ENCODE measurements at regions of chr2 and their contacts with region 1.

Region 1: DNA sequence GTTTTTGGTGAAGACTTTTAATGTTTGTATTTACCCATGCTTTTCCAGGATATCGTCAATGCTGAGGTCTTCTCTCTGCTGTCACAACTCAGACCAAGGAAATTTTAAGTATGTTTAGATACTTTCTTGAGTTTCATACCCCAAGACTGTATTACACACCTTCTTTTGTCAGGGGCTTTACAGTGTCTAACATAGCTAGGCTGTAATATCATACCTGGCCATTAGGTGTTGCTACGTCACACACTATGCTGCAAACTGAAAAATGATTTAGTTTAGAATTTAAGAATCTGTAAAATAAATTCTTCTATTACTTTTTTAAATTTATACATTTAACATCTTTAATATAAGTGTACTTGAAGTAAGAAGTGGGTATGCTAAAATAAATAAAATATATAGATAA is 358.4 kb upstream of the NRP2 start:
- DNase-seq: no peak
- H3K4me3 ChIP-seq: no peak overlapping the region
- H3K27ac ChIP-seq: no peak overlapping the region
- H3K4me1 ChIP-seq: no peaks in the 10 kb centered on the region
- H3K27me3 ChIP-seq: no peaks in the 10 kb centered on the region
- CTCF ChIP-seq: peak; percentile 31

Region 2: GRCh38 chr2:204108330-204108751 is 1215.6 kb before region 1 on chr2:
- intact Hi-C with region 1: loop called (anchors 10 kb)
- DNase-seq: no peak
- H3K4me3 ChIP-seq: no peak overlapping the region
- H3K27ac ChIP-seq: no peak overlapping the region
- H3K4me1 ChIP-seq: peaks cover 3% of the 10 kb centered on the region
- H3K27me3 ChIP-seq: no peaks in the 10 kb centered on the region
- CTCF ChIP-seq: peak; percentile 39

Region 3: GRCh38 chr2:205585449-205586383 is 261.8 kb after region 1 on chr2:
- intact Hi-C with region 1: no loop called
- DNase-seq: no peak
- H3K4me3 ChIP-seq: no peak overlapping the region
- H3K27ac ChIP-seq: no peak overlapping the region
- H3K4me1 ChIP-seq: no peaks in the 10 kb centered on the region
- H3K27me3 ChIP-seq: no peaks in the 10 kb centered on the region
- CTCF ChIP-seq: no peak

Region 4: GRCh38 chr2:205700331-205701132 is 376.6 kb after region 1 on chr2:
- intact Hi-C with region 1: no loop called
- DNase-seq: no peak
- H3K4me3 ChIP-seq: no peak overlapping the region
- H3K27ac ChIP-seq: peak overlapping the region; percentile 64
- H3K4me1 ChIP-seq: no peaks in the 10 kb centered on the region
- H3K27me3 ChIP-seq: no peaks in the 10 kb centered on the region
- CTCF ChIP-seq: no peak